RWPE1 (cell line): ENCODE measurements at regions of chr5 and their contacts with region 1.

Region 1: DNA sequence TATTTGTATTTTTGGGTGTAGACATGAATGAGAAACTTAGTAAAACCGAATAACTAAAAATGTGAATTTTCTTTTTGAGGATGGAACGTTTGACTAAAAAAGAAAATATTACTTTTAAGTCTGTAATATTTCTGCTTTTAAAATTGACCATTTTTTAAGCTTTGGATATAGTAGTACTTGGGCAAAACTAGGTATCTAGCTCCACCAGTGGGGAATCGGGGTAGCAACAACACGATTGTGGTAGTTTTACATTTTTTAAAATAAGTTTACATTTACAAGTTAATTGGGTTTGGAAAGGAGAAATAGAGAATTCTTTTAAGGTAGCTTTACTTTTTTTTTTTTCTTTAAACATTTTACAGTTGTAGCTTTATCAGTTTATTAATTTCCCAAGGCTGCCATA is 154.4 kb downstream of the MAN2A1 start:
- DNase-seq: peak; percentile 21
- H3K27ac ChIP-seq: no peak overlapping the region
- CTCF ChIP-seq: peak; percentile 17; the same call in 1 of the 2 replicates

Region 2: GRCh38 chr5:108381954-108382783 is 1462.0 kb before region 1 on chr5 and contains the start of gene FBXL17:
- CTCF ChIA-PET with region 1: no interaction called
- POLR2A ChIA-PET with region 1: interaction called, 11 read pairs
- DNase-seq: peak; percentile 91
- H3K27ac ChIP-seq: peak within 1 kb of the TSS; percentile 96
- CTCF ChIP-seq: no peak

Region 3: GRCh38 chr5:109769597-109770291 is 74.4 kb before region 1 on chr5:
- CTCF ChIA-PET with region 1: no interaction called
- POLR2A ChIA-PET with region 1: no interaction called
- DNase-seq: no peak
- H3K27ac ChIP-seq: no peak overlapping the region
- CTCF ChIP-seq: no peak